ENCODE measurements at regions of chr16 and their contacts with region 1.

Region 1: DNA sequence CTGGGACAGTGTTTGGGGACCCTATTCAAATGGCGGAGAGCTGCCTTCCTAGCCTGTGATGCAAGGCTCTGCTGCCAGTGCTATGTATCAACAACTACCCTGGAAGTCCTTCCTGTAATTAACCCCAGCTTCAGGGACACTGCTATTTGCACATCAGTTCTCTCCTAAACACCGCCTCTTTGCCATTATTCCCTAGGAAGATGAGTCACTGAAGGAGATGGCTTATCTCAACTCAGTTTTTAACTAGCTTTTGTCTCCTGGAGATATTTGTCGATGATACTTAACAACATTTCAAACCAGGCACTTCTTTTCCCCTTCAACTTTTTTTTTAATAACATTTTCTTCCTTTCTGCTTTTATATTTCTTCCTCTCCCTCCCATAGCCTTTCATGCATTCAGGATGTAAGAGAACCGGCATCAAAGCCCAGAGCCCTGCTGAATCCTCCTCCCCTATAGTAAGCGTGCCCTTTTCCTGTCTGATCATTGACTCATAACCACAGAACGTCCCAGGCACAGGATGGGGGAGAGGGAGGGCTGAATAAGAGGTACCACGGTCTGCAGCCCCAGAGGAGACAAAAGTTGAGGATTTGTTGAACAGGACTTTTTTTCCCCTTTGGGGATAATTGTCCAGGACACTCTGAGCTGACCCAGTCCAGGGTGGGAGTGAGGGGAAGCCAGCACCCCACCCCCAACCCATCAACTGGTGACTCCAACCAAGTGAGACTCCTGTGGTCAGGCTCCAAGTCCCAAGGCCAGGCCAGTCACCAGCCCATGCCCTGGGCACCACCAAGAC is 387.8 kb upstream of the SALL1 start:
- DNase-seq: peak; percentile 60
- H3K4me3 Mint-ChIP-seq: no peak overlapping the region
- H3K27ac Mint-ChIP-seq: no peak overlapping the region
- H3K4me1 Mint-ChIP-seq: peaks cover 9% of the 10 kb centered on the region
- H3K27me3 Mint-ChIP-seq: peaks cover 21% of the 10 kb centered on the region
- CTCF ChIP-seq: no peak

Region 2: DNA sequence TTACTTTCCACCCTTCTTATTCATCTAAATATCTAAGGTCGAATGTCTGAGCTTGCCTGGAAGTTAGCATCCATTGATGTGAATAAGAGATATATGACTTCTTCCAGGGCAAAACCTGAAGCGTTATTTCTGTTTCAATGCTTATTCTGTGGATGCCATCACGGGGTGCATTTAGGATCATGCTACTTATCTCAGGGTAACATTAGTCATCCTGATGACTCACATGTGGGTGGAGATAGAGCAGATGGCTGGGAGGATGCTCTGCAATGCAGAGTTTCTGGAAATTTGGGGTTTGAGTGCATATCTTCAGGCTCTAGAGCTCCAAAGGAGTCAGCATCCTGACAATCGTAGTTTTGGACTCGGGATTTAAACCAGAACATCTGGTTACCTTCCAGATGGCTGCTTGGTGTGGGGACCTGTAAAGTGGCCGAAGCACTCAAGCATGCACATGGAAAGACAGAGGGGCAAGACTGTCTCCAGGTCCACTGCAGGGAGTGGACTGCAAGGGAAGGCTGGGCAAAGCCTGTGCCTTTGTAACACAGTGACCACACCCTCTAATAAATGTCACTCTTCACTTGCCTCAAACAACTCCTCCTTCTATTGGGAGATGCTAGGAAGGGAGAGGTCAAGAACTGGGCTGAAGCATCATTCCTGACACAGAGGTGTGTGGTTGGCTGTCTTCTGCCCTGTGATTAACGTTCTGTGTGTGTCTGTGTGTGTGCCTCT is 212.6 kb before region 1 on chr16:
- CTCF ChIA-PET with region 1: no interaction called
- intact Hi-C with region 1: loop called (anchors 10 kb)
- DNase-seq: peak; percentile 6
- H3K4me3 Mint-ChIP-seq: no peak overlapping the region
- H3K27ac Mint-ChIP-seq: no peak overlapping the region
- H3K4me1 Mint-ChIP-seq: peaks cover 14% of the 10 kb centered on the region
- H3K27me3 Mint-ChIP-seq: peaks cover 25% of the 10 kb centered on the region
- CTCF ChIP-seq: no peak

Region 3: GRCh38 chr16:51374346-51374745 is 164.6 kb before region 1 on chr16:
- CTCF ChIA-PET with region 1: no interaction called
- intact Hi-C with region 1: no loop called
- DNase-seq: no peak
- H3K4me3 Mint-ChIP-seq: no peak overlapping the region
- H3K27ac Mint-ChIP-seq: no peak overlapping the region
- H3K4me1 Mint-ChIP-seq: no peaks in the 10 kb centered on the region
- H3K27me3 Mint-ChIP-seq: no peaks in the 10 kb centered on the region
- CTCF ChIP-seq: no peak

Region 4: GRCh38 chr16:51473091-51473490 is 65.8 kb before region 1 on chr16:
- CTCF ChIA-PET with region 1: no interaction called
- intact Hi-C with region 1: loop called (anchors 10 kb)
- DNase-seq: no peak
- H3K4me3 Mint-ChIP-seq: no peak overlapping the region
- H3K27ac Mint-ChIP-seq: no peak overlapping the region
- H3K4me1 Mint-ChIP-seq: no peaks in the 10 kb centered on the region
- H3K27me3 Mint-ChIP-seq: no peaks in the 10 kb centered on the region
- CTCF ChIP-seq: no peak

Region 5: DNA sequence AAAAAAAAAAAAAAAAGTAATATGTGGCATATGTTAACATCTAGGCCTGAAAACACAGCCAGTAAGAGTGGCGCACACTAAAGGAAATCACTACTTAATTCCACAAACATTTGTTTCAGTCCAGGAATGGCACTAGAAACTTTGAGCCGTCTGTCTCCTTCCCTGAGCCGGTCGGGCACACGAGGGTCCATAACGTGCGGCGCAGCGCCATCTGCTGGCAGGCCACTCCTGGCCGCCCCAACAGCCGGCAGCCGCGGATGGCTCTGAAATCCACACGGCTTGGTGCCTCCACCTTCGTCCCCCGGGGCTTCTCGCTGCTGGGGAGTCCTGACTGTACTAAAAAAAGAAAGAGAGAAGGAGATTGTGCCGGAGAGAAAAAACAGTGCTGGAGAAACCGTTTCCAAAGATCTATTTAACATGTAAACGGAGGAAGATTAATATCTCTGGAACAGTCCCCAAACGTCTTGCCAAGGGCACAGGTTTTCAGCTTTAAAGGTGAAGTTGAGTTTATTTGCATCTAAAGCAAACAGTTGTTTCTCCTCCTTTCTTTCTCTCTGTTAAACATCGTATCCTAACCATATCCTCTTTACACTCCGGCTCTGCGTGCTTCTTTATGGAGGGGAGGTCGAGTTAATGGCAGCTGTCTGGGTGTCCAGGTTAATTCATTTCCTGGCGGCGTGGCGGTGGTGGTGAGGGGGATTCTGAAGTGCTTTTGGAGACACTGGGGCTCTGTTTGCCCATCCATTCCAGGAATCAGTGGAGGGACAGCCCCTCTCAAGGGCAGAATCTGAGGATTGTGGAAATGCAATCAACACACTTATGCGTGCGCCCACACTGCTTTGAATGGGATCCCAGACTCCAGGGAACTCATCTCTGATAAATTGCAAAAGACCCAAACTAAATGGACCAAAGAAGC is 223.4 kb after region 1 on chr16:
- CTCF ChIA-PET with region 1: no interaction called
- intact Hi-C with region 1: no loop called
- DNase-seq: peak; percentile 86
- H3K4me3 Mint-ChIP-seq: peak overlapping the region; percentile 29
- H3K27ac Mint-ChIP-seq: no peak overlapping the region
- H3K4me1 Mint-ChIP-seq: peaks cover 18% of the 10 kb centered on the region
- H3K27me3 Mint-ChIP-seq: peaks cover 65% of the 10 kb centered on the region
- CTCF ChIP-seq: peak; percentile 96